ENCODE measurements at regions of chr1 and their contacts with region 1.

Region 1: GRCh38 chr1:76154206-76154956 is 79.8 kb downstream of the ST6GALNAC3 start:
- DNase-seq: peak; percentile 80
- H3K4me3 ChIP-seq: peak overlapping the region; percentile 29
- H3K27ac ChIP-seq: no peak overlapping the region
- H3K4me1 ChIP-seq: no peaks in the 10 kb centered on the region
- H3K27me3 ChIP-seq: no peaks in the 10 kb centered on the region
- CTCF ChIP-seq: peak; percentile 98

Region 2: GRCh38 chr1:75745276-75745675 is 409.1 kb before region 1 on chr1:
- CTCF ChIA-PET with region 1: no interaction called
- POLR2A ChIA-PET with region 1: no interaction called
- intact Hi-C with region 1: no loop called
- DNase-seq: no peak
- H3K4me3 ChIP-seq: no peak overlapping the region
- H3K27ac ChIP-seq: no peak overlapping the region
- H3K4me1 ChIP-seq: no peaks in the 10 kb centered on the region
- H3K27me3 ChIP-seq: no peaks in the 10 kb centered on the region
- CTCF ChIP-seq: no peak

Region 3: DNA sequence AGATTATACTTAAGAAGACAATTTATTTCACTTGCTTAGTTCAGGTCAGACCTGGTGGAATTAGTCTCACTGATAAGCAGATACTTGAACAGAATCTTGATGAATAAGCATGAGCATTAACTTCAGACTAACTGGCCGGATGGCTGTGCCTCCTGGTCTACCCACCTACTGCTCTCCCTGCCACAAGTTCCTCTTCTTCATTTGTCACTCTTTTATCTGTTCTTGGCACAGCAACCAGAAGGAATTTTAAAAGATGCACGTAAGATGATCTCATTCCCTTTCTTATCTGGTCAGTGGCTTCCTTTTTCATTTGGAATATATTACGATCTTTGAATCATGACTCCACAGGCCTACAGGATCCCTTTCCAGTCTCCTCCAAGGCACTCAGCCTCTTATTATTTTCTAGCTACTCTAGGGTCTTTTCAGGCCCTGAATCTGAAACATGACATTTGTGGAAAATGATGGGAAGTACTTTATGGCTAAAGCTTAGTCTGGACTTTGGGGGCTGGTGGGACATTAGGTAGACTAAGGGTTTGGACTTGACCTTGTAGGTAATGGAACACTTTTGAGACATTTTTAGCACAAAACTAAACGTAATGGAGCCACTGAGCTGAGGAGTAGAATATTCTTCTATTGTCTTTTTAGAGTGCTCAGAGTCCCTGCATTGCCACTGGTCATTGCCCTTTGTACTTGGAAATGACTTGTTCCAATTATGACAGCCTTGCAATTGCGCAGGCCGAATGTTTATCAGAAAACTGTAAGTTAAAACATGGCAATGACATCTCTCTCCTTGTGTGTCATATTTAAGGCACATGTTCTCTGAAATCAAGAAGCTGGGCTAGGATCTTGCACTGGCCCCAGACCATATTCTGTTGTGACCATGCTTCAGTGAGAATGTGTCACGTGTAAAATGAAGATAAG is 63.8 kb before region 1 on chr1:
- CTCF ChIA-PET with region 1: no interaction called
- POLR2A ChIA-PET with region 1: no interaction called
- intact Hi-C with region 1: no loop called
- DNase-seq: no peak
- H3K4me3 ChIP-seq: no peak overlapping the region
- H3K27ac ChIP-seq: no peak overlapping the region
- H3K4me1 ChIP-seq: no peaks in the 10 kb centered on the region
- H3K27me3 ChIP-seq: no peaks in the 10 kb centered on the region
- CTCF ChIP-seq: no peak

Region 4: GRCh38 chr1:76302711-76303339 is 148.4 kb after region 1 on chr1:
- CTCF ChIA-PET with region 1: no interaction called
- POLR2A ChIA-PET with region 1: no interaction called
- intact Hi-C with region 1: loop called (anchors 10 kb)
- DNase-seq: no peak
- H3K4me3 ChIP-seq: no peak overlapping the region
- H3K27ac ChIP-seq: no peak overlapping the region
- H3K4me1 ChIP-seq: no peaks in the 10 kb centered on the region
- H3K27me3 ChIP-seq: peaks cover 51% of the 10 kb centered on the region
- CTCF ChIP-seq: no peak

Measured in A673 (cell line).